ENCODE measurements at regions of chr6 and their contacts with region 1.

Region 1: DNA sequence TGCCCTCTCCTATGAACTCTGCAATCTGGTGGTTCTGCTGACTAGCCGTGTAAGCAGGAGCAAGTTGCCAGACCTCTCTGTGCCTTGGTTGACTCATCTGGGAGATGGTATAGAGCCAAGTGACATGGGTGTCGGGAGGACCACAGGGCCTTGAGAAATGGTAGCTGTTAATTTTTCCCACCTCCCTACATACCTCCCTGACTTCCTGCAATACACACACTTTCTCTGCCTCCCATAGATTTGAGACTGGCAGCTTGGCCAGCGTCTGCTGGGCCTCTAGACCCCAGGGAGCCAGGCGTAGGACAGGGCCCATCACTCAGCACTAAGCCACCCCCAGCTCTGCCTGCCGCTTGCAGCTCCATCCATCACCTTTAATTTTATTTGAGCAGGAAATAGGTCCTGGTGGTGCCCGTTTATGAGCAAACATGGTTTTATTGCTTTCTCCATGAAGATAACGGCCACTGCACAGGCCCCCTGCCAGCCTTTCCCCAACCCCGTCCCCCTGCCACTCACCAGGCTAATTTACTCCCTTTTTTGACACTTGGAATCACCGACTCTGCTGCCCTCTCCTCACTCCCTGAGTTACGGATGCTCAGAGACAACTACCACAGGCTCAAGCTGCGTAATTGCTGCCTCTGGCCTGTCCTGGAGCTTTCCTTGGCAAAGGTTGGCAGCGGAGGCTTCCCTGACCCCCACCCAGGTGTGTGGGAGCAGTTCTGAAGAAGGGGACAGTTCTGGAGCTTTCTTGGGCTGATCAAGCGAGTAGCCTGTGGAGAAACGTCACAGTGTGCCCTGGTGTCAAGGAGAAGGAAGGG is 11.1 kb downstream of the GLP1R start:
- DNase-seq: no peak
- H3K4me3 ChIP-seq: no peak overlapping the region
- H3K27ac ChIP-seq: no peak overlapping the region
- H3K4me1 ChIP-seq: no peaks in the 10 kb centered on the region
- H3K27me3 ChIP-seq: no peaks in the 10 kb centered on the region
- CTCF ChIP-seq: no peak

Region 2: DNA sequence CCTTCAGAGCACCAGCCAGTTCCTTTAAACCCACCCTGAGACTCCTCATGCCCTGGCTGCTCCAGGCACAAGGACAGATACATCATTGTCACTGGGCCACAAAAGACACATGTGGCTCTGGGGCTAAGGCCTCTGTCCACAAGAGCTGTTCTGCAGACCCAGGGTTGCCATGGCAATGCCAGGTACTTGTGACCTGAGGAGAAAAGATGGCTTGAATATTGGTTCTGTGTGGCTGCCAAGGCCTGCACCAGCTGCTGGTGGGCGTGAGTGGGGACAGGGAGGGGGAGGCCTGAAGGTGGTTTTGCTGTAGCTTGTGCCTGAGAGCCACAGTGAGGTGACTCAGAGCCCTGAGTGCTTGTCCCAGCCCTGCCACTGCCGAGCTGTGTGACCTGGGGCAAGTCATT is 23.5 kb after region 1 on chr6:
- CTCF ChIA-PET with region 1: no interaction called
- dilution Hi-C with region 1: no loop called
- in situ Hi-C with region 1: no loop called
- intact Hi-C with region 1: no loop called
- DNase-seq: no peak
- H3K4me3 ChIP-seq: no peak overlapping the region
- H3K27ac ChIP-seq: no peak overlapping the region
- H3K4me1 ChIP-seq: no peaks in the 10 kb centered on the region
- H3K27me3 ChIP-seq: no peaks in the 10 kb centered on the region
- CTCF ChIP-seq: no peak

Region 3: GRCh38 chr6:39144481-39145173 is 84.9 kb after region 1 on chr6:
- CTCF ChIA-PET with region 1: no interaction called
- dilution Hi-C with region 1: loop called (anchors 5 kb)
- in situ Hi-C with region 1: no loop called
- intact Hi-C with region 1: no loop called
- DNase-seq: no peak
- H3K4me3 ChIP-seq: no peak overlapping the region
- H3K27ac ChIP-seq: no peak overlapping the region
- H3K4me1 ChIP-seq: no peaks in the 10 kb centered on the region
- H3K27me3 ChIP-seq: peaks cover 2% of the 10 kb centered on the region
- CTCF ChIP-seq: no peak

Measured in mammary epithelial cell (primary cell).